Activated CD4-positive, alpha-beta memory T cell treated with anti-CD3 and anti-CD28 coated beads for 36 hours (primary cell): ENCODE measurements at regions of chrX and their contacts with region 1.

Region 1: DNA sequence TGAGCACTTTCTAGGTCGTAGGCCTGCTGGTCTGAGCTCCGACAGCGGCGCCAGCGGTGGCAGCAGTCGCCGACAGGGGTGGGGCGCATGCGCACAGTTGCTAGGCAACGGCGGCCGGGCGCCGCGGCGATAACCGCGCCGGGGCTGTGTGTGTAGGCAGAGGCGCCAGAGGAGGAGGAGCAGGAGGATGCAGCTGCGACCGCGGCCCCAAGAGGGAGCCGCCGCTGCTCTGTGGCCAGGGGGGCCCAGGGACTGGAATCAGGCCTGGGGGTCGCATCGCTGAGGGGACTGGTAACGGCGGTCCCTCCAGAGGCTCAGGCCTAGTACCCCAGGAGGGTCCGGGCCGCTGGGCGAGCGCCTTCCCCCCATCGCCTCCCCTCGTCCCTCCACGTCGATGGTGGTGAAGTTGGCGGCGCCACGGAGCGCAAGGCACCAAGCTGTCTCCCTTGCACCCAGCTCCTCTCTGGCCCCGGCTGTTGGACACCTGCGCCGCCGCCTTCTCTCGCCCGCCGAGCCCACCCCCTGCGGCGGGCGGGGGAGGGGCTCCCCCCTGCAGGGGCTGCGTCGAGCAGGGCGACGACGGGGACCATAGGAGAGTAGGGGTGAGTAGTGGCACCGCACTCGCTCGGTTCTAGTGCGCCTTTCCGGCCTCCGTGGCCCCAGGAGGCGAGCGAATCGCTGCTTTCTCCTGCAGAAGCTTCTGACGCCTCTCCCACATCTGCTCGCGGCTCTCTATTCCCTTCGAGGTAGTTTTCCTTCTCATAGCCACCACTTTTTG is 58.6 kb upstream of the ZC4H2 start:
- DNase-seq: peak; percentile 90
- H3K4me3 Mint-ChIP-seq: peak within 1 kb of the TSS; percentile 88
- H3K27ac Mint-ChIP-seq: peak within 1 kb of the TSS; percentile 85
- H3K4me1 Mint-ChIP-seq: peaks cover 15% of the 10 kb centered on the region
- H3K27me3 Mint-ChIP-seq: no peaks in the 10 kb centered on the region

Region 2: GRCh38 chrX:64205735-64206491 is 828.9 kb before region 1 on chrX:
- CTCF ChIA-PET with region 1: no interaction called
- POLR2A ChIA-PET with region 1: no interaction called
- intact Hi-C with region 1: loop called (anchors 10 kb)
- DNase-seq: peak; percentile 92
- H3K4me3 Mint-ChIP-seq: peak overlapping the region; percentile 81
- H3K27ac Mint-ChIP-seq: peak overlapping the region; percentile 91
- H3K4me1 Mint-ChIP-seq: peaks cover 7% of the 10 kb centered on the region
- H3K27me3 Mint-ChIP-seq: no peaks in the 10 kb centered on the region

Region 3: GRCh38 chrX:64394874-64395567 is 639.8 kb before region 1 on chrX and contains the start of gene MTMR8:
- CTCF ChIA-PET with region 1: no interaction called
- POLR2A ChIA-PET with region 1: no interaction called
- intact Hi-C with region 1: loop called (anchors 10 kb)
- DNase-seq: peak; percentile 86
- H3K4me3 Mint-ChIP-seq: peak within 1 kb of the TSS; percentile 90
- H3K27ac Mint-ChIP-seq: peak within 1 kb of the TSS; percentile 81
- H3K4me1 Mint-ChIP-seq: peaks cover 22% of the 10 kb centered on the region
- H3K27me3 Mint-ChIP-seq: no peaks in the 10 kb centered on the region
- total RNA-seq, gene MTMR8: 5.0 to 5.8 TPM

Region 4: DNA sequence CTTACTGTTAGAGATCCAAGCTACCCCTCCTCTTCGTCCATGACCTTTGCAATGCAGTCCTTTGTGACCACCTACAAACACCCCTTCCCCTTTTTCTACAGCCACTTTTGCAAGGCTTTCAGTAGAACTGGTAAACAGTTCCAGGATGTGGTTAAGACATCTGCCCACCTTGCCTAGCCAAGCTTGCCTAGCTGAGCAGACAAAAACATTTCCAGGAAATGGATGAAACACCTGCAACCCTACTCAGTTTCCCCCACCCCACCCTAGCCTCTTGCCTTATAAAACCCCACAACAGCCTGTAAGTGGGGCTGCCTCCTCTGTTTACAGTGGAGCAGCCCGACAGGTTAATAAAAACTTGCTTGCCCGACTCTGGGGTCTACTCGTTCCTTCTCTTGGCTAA is 192.4 kb before region 1 on chrX:
- CTCF ChIA-PET with region 1: no interaction called
- POLR2A ChIA-PET with region 1: no interaction called
- intact Hi-C with region 1: no loop called
- DNase-seq: peak; percentile 24
- H3K4me3 Mint-ChIP-seq: no peak overlapping the region
- H3K27ac Mint-ChIP-seq: peak overlapping the region; percentile 92
- H3K4me1 Mint-ChIP-seq: peaks cover 26% of the 10 kb centered on the region
- H3K27me3 Mint-ChIP-seq: no peaks in the 10 kb centered on the region

Region 5: GRCh38 chrX:64975989-64976672 is 58.7 kb before region 1 on chrX and contains the start of gene ZC4H2:
- CTCF ChIA-PET with region 1: interaction called, 5 read pairs
- POLR2A ChIA-PET with region 1: interaction called, 7 read pairs
- intact Hi-C with region 1: loop called (anchors 1 kb)
- DNase-seq: peak; percentile 79
- H3K4me3 Mint-ChIP-seq: peak within 1 kb of the TSS; percentile 79
- H3K27ac Mint-ChIP-seq: peak within 1 kb of the TSS; percentile 44
- H3K4me1 Mint-ChIP-seq: peaks cover 16% of the 10 kb centered on the region
- H3K27me3 Mint-ChIP-seq: no peaks in the 10 kb centered on the region
- total RNA-seq, gene ZC4H2: 8.9 to 9.1 TPM

Region 6: GRCh38 chrX:65406532-65406931 is 371.7 kb after region 1 on chrX:
- CTCF ChIA-PET with region 1: no interaction called
- POLR2A ChIA-PET with region 1: no interaction called
- intact Hi-C with region 1: loop called (anchors 10 kb)
- DNase-seq: peak; percentile 45
- H3K4me3 Mint-ChIP-seq: peak overlapping the region; percentile 39
- H3K27ac Mint-ChIP-seq: no peak overlapping the region
- H3K4me1 Mint-ChIP-seq: peaks cover 2% of the 10 kb centered on the region
- H3K27me3 Mint-ChIP-seq: peaks cover 21% of the 10 kb centered on the region

Region 7: DNA sequence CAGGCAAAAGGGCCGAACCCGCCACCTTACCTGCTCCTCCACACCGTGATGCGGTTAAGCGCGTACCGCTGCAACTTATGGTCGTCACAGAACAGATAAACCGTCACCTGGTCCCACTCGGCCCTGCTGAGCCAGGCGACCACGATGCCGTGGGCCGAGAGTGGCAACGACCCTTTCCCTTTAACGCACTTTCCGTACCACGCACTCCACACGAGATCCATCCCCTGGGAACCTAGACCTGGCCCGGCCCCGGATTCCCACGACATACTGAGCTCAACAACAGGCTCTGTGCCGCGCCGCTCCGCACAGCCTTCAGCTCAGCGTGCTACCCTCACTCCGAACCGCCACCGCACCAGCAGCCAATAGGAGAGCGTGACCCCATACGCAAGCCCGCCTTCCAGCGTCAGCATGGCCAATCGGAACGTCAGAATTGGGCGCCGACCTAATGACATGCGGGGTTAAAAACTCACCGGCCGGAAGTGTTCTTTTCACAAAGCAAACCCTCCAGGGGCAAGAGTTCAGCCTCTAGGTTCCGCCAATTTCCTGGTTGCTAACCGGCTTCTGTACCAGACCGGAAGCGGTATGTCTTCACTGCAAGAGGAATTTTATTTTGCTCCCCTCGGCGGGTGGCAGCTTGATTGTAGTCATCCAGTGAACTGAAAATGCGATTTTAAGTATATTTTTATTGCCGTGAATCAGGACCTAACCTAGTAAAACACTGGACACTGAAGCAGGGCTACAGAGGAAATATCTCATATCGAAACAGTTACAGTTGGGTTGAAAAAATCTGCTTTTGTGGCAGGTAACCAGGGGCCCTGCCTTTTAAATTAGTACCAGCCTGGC is 499.8 kb after region 1 on chrX and contains the start of gene LAS1L:
- CTCF ChIA-PET with region 1: interaction called, 3 read pairs
- POLR2A ChIA-PET with region 1: no interaction called
- intact Hi-C with region 1: loop called (anchors 1 kb)
- DNase-seq: peak; percentile 95
- H3K4me3 Mint-ChIP-seq: peak within 1 kb of the TSS; percentile 95
- H3K27ac Mint-ChIP-seq: peak within 1 kb of the TSS; percentile 88
- H3K4me1 Mint-ChIP-seq: peaks cover 15% of the 10 kb centered on the region
- H3K27me3 Mint-ChIP-seq: no peaks in the 10 kb centered on the region
- total RNA-seq, gene LAS1L: 56.7 to 57.9 TPM